Heart right ventricle (tissue), 16 donors: ENCODE measurements at regions of chr15 and their contacts with region 1.

Region 1: GRCh38 chr15:67065444-67066093 is at the start of gene SMAD3:
- DNase-seq: peak; percentile 91 to 92
- ATAC-seq: peak; percentile 86 to 92 (median 90)
- H3K4me3 ChIP-seq: peak within 1 kb of the TSS; percentile 73 to 96 (median 82)
- H3K27ac ChIP-seq: peak within 1 kb of the TSS; percentile 82 to 97 (median 93)
- H3K4me1 ChIP-seq: peaks cover 2 to 50% (median 38%) of the 10 kb centered on the region in 9 donors
- H3K27me3 ChIP-seq: no peaks in the 10 kb centered on the region
- CTCF ChIP-seq: peak in 1 of 9 donors; percentile 19
- total RNA-seq, gene SMAD3: 11.3 to 44.8 (median 15.7) TPM

Region 2: GRCh38 chr15:66946578-66947164 is 118.9 kb before region 1 on chr15:
- intact Hi-C with region 1: loop called in 2 of 10 experiments (anchors 5 to 10 kb)
- DNase-seq: peak; percentile 60 to 63
- ATAC-seq: peak; percentile 45 to 79 (median 68)
- H3K4me3 ChIP-seq: peak overlapping the region in 1 of 10 donors; percentile 6
- H3K27ac ChIP-seq: no peak overlapping the region
- H3K4me1 ChIP-seq: peaks cover 0 to 9% (median 0%) of the 10 kb centered on the region in 9 donors
- H3K27me3 ChIP-seq: no peaks in the 10 kb centered on the region
- CTCF ChIP-seq: peak; percentile 84 to 98 (median 92)

Region 3: GRCh38 chr15:67039384-67040075 is 26.0 kb before region 1 on chr15:
- intact Hi-C with region 1: no loop called
- DNase-seq: no peak
- ATAC-seq: peak in 1 of 8 donors; percentile 20
- H3K4me3 ChIP-seq: no peak overlapping the region
- H3K27ac ChIP-seq: no peak overlapping the region
- H3K4me1 ChIP-seq: peaks cover 0 to 40% (median 8%) of the 10 kb centered on the region in 9 donors
- H3K27me3 ChIP-seq: no peaks in the 10 kb centered on the region
- CTCF ChIP-seq: no peak

Region 4: DNA sequence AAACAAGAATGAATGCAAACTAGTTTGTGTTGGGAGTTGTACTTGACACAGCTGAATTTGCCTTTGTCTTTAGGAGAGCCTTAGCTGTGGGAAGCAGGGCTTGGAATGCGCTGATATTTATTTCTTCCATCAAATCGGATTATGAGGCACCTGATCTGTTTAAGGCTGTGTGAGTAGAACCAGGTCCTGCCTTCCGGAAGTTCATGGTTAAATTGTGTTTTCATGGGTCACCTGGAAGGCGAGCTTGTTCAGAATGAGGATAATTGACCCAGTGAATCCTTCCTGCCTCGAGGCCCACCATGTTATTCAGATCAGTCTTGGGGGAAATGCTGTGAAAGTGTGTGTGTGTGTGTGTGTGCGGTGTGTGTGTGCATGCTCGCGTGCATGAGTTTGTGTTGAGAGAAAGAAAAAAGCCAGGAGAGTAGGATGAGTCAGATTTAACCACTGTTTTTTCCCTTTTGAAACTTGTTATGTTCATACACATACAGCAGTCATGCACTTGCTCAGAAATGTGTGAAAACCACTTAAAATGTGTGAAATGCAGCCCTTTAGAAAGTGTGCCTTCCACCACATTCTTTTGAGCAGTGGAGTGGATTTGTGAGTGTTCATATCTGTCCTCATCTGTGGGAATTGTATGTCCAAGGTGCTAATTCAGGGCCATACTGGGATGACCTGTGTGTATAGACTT is 36.5 kb after region 1 on chr15:
- intact Hi-C with region 1: loop called in 3 of 10 experiments (anchors 5 kb)
- DNase-seq: no peak
- ATAC-seq: no peak
- H3K4me3 ChIP-seq: no peak overlapping the region
- H3K27ac ChIP-seq: peak overlapping the region in 1 of 10 donors; percentile 70
- H3K4me1 ChIP-seq: peaks cover 24 to 100% (median 74%) of the 10 kb centered on the region in 9 donors
- H3K27me3 ChIP-seq: no peaks in the 10 kb centered on the region
- CTCF ChIP-seq: no peak

Region 5: GRCh38 chr15:67120839-67121643 is 55.5 kb after region 1 on chr15:
- intact Hi-C with region 1: loop called in 1 of 10 experiments (anchors 2 kb)
- DNase-seq: peak; percentile 88 to 89
- ATAC-seq: peak; percentile 84 to 93 (median 88)
- H3K4me3 ChIP-seq: peak overlapping the region in 6 of 10 donors; percentile 2 to 31 (median 20)
- H3K27ac ChIP-seq: peak overlapping the region; percentile 59 to 92 (median 88)
- H3K4me1 ChIP-seq: peaks cover 28 to 98% (median 80%) of the 10 kb centered on the region in 9 donors
- H3K27me3 ChIP-seq: no peaks in the 10 kb centered on the region
- CTCF ChIP-seq: peak in 1 of 9 donors; percentile 5

Region 6: GRCh38 chr15:67175643-67176071 is 110.1 kb after region 1 on chr15:
- intact Hi-C with region 1: loop called in 1 of 10 experiments (anchors 10 kb)
- DNase-seq: no peak
- ATAC-seq: peak in 4 of 8 donors; percentile 10 to 31 (median 18)
- H3K4me3 ChIP-seq: no peak overlapping the region
- H3K27ac ChIP-seq: peak overlapping the region in 2 of 10 donors; percentile 17 to 65
- H3K4me1 ChIP-seq: peaks cover 0 to 50% (median 33%) of the 10 kb centered on the region in 9 donors
- H3K27me3 ChIP-seq: no peaks in the 10 kb centered on the region
- CTCF ChIP-seq: no peak

Region 7: DNA sequence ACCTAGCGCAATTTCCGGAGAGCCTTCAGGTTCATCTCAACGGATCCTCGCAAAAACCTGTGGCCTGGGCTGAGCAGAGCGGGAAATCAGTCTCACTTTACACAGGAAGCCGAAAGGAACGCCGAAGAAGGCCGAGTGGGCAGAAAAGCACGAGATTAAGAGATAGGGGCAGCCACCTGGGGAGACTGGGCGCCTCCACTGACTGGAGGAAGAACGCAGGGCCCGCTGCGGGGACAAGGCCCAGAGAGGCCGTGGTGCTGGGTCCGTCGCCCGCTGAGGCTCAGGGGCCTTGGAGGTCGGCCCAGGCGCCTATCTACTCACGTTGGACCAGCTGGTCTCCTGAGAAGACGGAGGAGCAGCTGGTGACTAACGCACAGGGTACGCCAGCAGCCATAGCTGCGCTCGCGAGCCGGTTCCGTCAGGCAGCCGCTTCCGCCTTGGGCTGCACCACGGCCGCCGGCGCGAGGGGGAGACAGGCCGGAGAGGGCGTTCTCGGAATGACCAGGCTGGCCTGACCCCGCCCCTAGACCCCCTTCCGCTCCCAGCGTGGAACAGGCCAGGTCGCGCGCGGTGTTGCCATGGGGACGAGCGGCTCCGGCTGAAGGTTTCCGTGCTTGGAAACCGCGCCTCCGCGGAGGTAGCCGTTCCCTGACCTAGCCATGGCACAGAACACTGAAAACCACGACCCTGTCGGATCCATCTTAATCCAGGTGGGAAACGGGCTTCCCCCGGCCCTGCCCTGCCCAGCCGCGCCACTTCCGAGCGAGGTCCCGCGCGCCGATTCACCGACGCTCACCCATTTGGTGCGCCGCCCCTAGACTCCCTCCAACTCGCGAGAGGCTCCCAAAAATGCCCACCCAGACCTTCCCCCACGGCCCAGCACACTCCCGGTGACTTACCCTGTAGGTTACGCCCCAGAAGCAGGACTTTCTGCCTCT is 188.9 kb after region 1 on chr15 and contains the starts of genes AAGAB and IQCH:
- intact Hi-C with region 1: loop called in 6 of 10 experiments (anchors 2 to 10 kb)
- DNase-seq: peak; percentile 97 to 99
- ATAC-seq: peak; percentile 99 to 100 (median 100)
- H3K4me3 ChIP-seq: peak within 1 kb of the TSS; percentile 50 to 90 (median 75)
- H3K27ac ChIP-seq: peak within 1 kb of the TSS in 9 of 10 donors; percentile 69 to 90 (median 84)
- H3K4me1 ChIP-seq: peaks cover 0 to 24% (median 14%) of the 10 kb centered on the region in 9 donors
- H3K27me3 ChIP-seq: no peaks in the 10 kb centered on the region
- CTCF ChIP-seq: peak in 4 of 9 donors; percentile 7 to 25 (median 14)
- total RNA-seq, gene AAGAB: 17.4 to 33.4 (median 24.3) TPM
- total RNA-seq, gene IQCH: 0.51 to 2.6 (median 1.3) TPM